PC-9 (cell line): ENCODE measurements at regions of chr2 and their contacts with region 1.

Region 1: GRCh38 chr2:119744298-119744939 is 15.3 kb upstream of the PTPN4 start:
- DNase-seq: peak; percentile 70 to 93
- H3K4me3 ChIP-seq: no peak overlapping the region
- H3K27ac ChIP-seq: no peak overlapping the region
- H3K4me1 ChIP-seq: peaks cover 35% of the 10 kb centered on the region
- H3K27me3 ChIP-seq: no peaks in the 10 kb centered on the region
- CTCF ChIP-seq: no peak

Region 2: GRCh38 chr2:119158563-119159347 is 585.7 kb before region 1 on chr2 and contains the start of gene C1QL2:
- CTCF ChIA-PET with region 1: no interaction called
- POLR2A ChIA-PET with region 1: no interaction called
- intact Hi-C with region 1: no loop called
- DNase-seq: no peak
- H3K4me3 ChIP-seq: no peak within 1 kb of the TSS
- H3K27ac ChIP-seq: no peak within 1 kb of the TSS
- H3K4me1 ChIP-seq: no peaks in the 10 kb centered on the region
- H3K27me3 ChIP-seq: peaks cover 14% of the 10 kb centered on the region; the same call in 1 of the 2 replicates
- CTCF ChIP-seq: no peak
- total RNA-seq, gene C1QL2: not detected in 2 replicates

Region 3: GRCh38 chr2:119730671-119731193 is 13.7 kb before region 1 on chr2:
- CTCF ChIA-PET with region 1: no interaction called
- POLR2A ChIA-PET with region 1: no interaction called
- intact Hi-C with region 1: no loop called
- DNase-seq: no peak
- H3K4me3 ChIP-seq: no peak overlapping the region
- H3K27ac ChIP-seq: no peak overlapping the region
- H3K4me1 ChIP-seq: no peaks in the 10 kb centered on the region
- H3K27me3 ChIP-seq: peaks cover 5% of the 10 kb centered on the region; the same call in 1 of the 2 replicates
- CTCF ChIP-seq: no peak

Region 4: DNA sequence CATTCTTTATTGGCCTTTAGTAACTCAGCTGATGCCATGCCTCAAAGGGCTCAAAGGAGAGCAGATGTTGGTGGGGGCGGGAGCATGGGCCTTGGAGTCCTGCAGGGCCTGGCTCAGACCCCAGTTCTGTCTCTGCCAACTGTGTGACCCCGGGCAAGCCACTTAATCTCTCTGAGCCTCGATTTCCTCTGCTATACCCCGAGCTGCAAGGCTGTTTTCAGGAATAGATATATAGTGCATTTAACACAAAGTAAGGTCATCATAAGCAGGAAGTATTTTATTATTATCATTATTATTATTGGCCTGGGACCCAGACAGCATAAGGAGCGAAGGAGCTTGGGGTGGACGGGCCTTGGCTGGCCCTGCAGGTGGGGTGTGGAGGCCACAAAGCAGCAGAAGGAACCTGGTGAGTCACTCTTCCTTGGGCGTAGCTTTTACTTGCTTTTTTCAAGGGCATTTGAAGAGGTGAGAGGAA is 764.2 kb after region 1 on chr2:
- CTCF ChIA-PET with region 1: no interaction called
- POLR2A ChIA-PET with region 1: no interaction called
- intact Hi-C with region 1: loop called (anchors 5 kb)
- DNase-seq: peak; percentile 43 to 57
- H3K4me3 ChIP-seq: no peak overlapping the region
- H3K27ac ChIP-seq: no peak overlapping the region
- H3K4me1 ChIP-seq: peaks cover 6% of the 10 kb centered on the region; the same call in 1 of the 2 replicates
- H3K27me3 ChIP-seq: no peaks in the 10 kb centered on the region
- CTCF ChIP-seq: no peak